ENCODE measurements at regions of chr4 and their contacts with region 1.

Region 1: DNA sequence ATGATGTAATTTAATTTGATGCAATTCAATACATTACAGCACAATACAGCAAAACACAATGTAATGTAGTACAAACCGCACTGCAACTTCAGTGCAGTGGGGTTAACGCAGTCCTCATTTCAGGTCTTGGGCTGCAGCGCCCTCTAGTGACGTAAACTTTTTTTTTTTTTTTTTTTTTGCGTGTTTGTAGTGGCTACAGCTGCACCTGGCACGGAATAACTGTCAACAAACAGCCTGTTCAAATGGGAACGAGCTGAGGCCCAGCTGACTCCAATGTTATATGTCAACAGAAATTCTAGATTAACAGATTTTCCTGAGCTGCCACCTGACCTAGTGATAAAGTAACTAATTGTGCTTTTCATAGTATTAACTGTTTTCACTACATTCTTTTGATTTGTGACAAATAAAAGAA is 33.5 kb upstream of the RASSF6 start:
- H3K4me3 Mint-ChIP-seq: no peak overlapping the region
- H3K27ac Mint-ChIP-seq: no peak overlapping the region
- H3K4me1 Mint-ChIP-seq: no peaks in the 10 kb centered on the region
- H3K27me3 Mint-ChIP-seq: peaks cover 5% of the 10 kb centered on the region

Region 2: DNA sequence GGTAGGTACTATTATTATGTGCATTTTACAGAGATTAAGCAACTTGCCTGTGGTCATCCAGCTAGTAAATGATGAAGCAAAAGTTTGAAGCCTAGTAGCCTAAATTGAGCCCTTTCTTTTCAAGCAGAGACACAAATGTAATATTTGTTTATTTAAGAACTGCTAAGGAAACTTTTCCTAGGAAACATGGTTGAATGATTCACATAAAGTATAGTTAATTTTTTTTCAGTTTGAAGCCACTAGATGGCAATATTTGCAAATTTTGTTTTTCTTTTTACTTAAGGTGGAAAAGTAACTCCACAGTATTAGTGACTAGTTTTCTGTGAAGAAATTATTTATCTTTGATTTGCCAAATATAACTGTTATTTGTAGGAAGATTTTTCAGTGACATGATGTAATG is 342.3 kb before region 1 on chr4:
- intact Hi-C with region 1: loop called (anchors 2 kb)
- H3K4me3 Mint-ChIP-seq: no peak overlapping the region
- H3K27ac Mint-ChIP-seq: no peak overlapping the region
- H3K4me1 Mint-ChIP-seq: peaks cover 12% of the 10 kb centered on the region
- H3K27me3 Mint-ChIP-seq: no peaks in the 10 kb centered on the region

Region 3: DNA sequence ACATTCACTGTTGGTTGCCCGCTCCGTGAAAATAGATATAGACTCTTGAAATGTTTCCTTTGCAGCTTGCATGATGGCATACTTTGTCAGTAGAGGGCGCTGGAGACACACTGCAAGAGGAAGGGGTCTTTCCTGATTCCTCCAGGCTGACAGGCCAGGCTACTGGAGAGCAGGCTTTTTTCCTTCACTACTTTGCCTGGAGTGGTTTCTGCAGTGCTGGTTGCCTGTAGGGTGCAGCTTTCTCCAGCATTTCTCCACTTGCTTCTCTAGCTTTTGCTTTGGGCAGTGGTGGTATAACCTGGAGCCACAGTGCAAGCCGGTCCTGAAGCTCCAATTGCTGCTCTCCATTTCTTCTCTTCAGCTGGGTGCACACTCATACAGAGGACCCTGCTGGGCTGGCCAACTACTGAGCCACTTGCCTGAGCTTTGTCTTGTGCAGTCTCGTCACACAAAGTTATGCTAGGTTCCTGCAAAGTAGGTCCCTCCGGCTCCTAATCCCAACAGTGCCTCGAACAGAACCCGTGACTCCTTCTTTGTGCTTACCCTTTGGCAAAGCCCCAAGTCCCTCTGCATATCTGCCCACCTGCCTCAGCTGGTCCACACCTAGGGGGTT is 79.8 kb before region 1 on chr4:
- intact Hi-C with region 1: loop called (anchors 2 kb)
- H3K4me3 Mint-ChIP-seq: no peak overlapping the region
- H3K27ac Mint-ChIP-seq: no peak overlapping the region
- H3K4me1 Mint-ChIP-seq: peaks cover 8% of the 10 kb centered on the region
- H3K27me3 Mint-ChIP-seq: peaks cover 15% of the 10 kb centered on the region

Region 4: GRCh38 chr4:73593631-73594241 is 60.0 kb before region 1 on chr4:
- intact Hi-C with region 1: loop called (anchors 1 kb)
- H3K4me3 Mint-ChIP-seq: no peak overlapping the region
- H3K27ac Mint-ChIP-seq: no peak overlapping the region
- H3K4me1 Mint-ChIP-seq: peaks cover 20% of the 10 kb centered on the region
- H3K27me3 Mint-ChIP-seq: peaks cover 42% of the 10 kb centered on the region